Caco-2 (cell line): ENCODE measurements at regions of chr11 and their contacts with region 1.

Region 1: DNA sequence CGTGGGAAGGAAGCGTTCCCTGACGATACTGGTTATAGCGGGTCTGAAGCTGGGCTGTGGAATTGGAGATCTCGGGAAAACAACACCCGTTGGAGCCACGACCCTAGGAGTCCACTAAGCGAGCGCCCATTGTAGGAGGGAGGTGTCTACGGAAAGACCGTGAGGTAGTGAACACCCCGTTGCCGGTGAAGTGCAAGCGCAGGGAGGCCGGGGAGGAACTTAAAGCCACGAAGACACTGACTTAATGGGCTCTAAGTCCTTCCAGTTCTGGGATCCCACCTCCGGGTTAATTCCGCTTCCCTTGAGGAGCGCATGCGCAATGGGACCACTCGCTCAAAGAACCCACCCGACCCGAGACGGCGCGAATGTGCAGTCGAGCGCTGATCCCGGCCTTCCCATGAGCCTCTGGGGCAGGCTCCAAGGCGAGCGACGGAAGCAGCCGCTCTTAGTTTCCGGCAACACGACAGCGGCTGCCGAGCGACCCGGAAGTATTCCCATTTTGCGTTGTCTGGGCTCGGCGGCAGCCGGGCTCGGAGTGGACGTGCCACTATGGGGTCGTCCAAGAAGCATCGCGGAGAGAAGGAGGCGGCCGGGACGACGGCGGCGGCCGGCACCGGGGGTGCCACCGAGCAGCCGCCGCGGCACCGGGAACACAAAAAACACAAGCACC is at the start of gene SART1:
- DNase-seq: peak; percentile 96 to 98
- H3K4me3 ChIP-seq: peak within 1 kb of the TSS; percentile 94
- H3K4me3 Mint-ChIP-seq: peak within 1 kb of the TSS; percentile 72
- H3K27ac Mint-ChIP-seq: peak within 1 kb of the TSS; percentile 95
- H3K4me1 ChIP-seq: peaks cover 18% of the 10 kb centered on the region
- H3K4me1 Mint-ChIP-seq: peaks cover 13% of the 10 kb centered on the region
- H3K27me3 ChIP-seq: no peaks in the 10 kb centered on the region
- H3K27me3 Mint-ChIP-seq: no peaks in the 10 kb centered on the region
- CTCF ChIP-seq: no peak
- total RNA-seq, gene SART1: 78.0 and 84.5 TPM in 2 replicates

Region 2: DNA sequence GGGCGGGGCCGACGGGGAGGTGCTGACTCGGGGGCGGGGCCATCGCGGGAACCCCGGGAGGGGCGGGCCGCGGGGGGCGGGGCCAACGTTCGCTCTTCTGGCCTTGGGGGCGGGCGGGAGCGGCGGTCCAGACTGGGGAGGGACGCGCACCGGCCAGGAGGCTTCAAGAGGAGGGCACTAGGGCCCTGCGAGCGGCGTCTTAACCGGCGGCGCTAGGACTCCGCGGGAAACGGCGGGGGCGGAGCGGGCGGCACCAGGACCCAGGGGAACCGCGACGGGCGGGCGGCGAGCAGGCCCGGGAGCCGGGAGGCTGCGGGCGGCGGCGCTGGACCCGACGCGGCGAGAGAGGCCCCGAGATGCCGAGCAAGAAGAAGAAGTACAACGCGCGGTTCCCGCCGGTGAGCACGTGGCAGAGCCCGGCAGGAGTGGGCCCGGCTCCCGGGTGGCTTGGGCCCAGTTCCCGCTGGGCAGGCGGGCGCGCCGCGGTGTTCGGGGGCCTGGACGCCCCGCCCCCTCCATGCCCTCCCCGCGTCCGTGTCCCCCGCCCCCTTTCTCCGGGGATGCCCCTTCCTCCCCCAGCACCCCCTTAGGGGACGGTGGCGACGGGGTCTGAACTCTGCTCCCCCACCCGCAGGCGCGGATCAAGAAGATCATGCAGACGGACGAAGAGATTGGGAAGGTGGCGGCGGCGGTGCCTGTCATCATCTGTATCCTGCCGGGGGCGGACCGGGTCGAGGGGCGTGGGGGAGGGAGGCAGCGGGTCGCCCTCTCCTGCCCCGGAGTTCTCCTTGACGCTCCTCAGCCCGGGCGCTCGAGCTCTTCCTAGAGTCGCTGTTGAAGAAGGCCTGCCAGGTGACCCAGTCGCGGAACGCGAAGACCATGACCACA is 42.0 kb before region 1 on chr11 and contains the start of gene DRAP1:
- CTCF ChIA-PET with region 1: no interaction called
- POLR2A ChIA-PET with region 1: no interaction called
- intact Hi-C with region 1: loop called (anchors 5 kb)
- DNase-seq: peak; percentile 99
- H3K4me3 ChIP-seq: peak within 1 kb of the TSS; percentile 95
- H3K4me3 Mint-ChIP-seq: peak within 1 kb of the TSS; percentile 90
- H3K27ac Mint-ChIP-seq: peak within 1 kb of the TSS; percentile 75
- H3K4me1 ChIP-seq: peaks cover 15% of the 10 kb centered on the region
- H3K4me1 Mint-ChIP-seq: no peaks in the 10 kb centered on the region
- H3K27me3 ChIP-seq: no peaks in the 10 kb centered on the region
- H3K27me3 Mint-ChIP-seq: no peaks in the 10 kb centered on the region
- CTCF ChIP-seq: peak in 1 of 2 experiments; percentile 1
- total RNA-seq, gene DRAP1: 91.0 and 93.1 TPM in 2 replicates